ENCODE measurements at regions of chr2 and their contacts with region 1.

Region 1: GRCh38 chr2:220347626-220348025 is 720.2 kb downstream of the SLC4A3 start:
- DNase-seq: no peak
- H3K4me3 ChIP-seq: no peak overlapping the region
- H3K27ac ChIP-seq: no peak overlapping the region
- H3K4me1 ChIP-seq: no peaks in the 10 kb centered on the region
- H3K27me3 ChIP-seq: no peaks in the 10 kb centered on the region
- CTCF ChIP-seq: no peak

Region 2: GRCh38 chr2:220215785-220216184 is 131.8 kb before region 1 on chr2:
- CTCF ChIA-PET with region 1: no interaction called
- POLR2A ChIA-PET with region 1: interaction called, 20 read pairs
- intact Hi-C with region 1: no loop called
- DNase-seq: no peak
- H3K4me3 ChIP-seq: no peak overlapping the region
- H3K27ac ChIP-seq: no peak overlapping the region
- H3K4me1 ChIP-seq: no peaks in the 10 kb centered on the region
- H3K27me3 ChIP-seq: no peaks in the 10 kb centered on the region
- CTCF ChIP-seq: no peak